Naive thymus-derived CD8-positive, alpha-beta T cell (primary cell): ENCODE measurements at regions of chr10 and their contacts with region 1.

Region 1: DNA sequence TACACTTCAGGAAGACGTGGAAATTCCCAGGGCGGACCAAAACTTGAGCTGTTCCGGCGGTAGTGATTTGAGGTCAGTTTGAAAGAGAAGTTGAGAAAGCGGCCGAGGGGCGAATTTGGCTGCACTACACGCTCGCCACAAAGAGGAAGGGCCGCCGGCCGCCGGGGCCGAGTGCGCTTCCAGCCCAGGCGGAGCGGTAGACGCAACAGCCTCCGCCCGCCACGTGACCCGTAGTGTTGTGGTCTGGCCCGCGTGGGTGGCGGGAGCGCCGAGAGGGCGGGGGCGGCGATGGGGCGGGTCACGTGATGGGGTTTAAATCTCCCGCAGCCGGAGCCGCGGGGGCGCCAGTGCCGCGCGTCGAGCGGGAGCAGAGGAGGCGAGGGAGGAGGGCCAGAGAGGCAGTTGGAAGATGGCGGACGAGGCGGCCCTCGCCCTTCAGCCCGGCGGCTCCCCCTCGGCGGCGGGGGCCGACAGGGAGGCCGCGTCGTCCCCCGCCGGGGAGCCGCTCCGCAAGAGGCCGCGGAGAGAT is at the start of gene SIRT1:
- DNase-seq: peak; percentile 88 to 95 (median 92)
- ATAC-seq: peak; percentile 78 to 82
- H3K4me3 Mint-ChIP-seq: peak within 1 kb of the TSS; percentile 90 to 98 (median 95)
- H3K27ac Mint-ChIP-seq: peak within 1 kb of the TSS; percentile 94 to 98 (median 96)
- H3K4me1 Mint-ChIP-seq: peaks cover 16 to 45% (median 35%) of the 10 kb centered on the region in 4 donors
- H3K27me3 Mint-ChIP-seq: no peaks in the 10 kb centered on the region
- polyA plus RNA-seq, gene SIRT1: 10.2 to 18.7 (median 12.4) TPM

Region 2: GRCh38 chr10:67849331-67850011 is 34.9 kb before region 1 on chr10:
- POLR2A ChIA-PET with region 1: interaction called, 32 read pairs
- DNase-seq: peak; percentile 83 to 96 (median 90)
- ATAC-seq: peak; percentile 98 to 99
- H3K4me3 Mint-ChIP-seq: peak overlapping the region; percentile 85 to 99 (median 96)
- H3K27ac Mint-ChIP-seq: peak overlapping the region; percentile 86 to 100 (median 98)
- H3K4me1 Mint-ChIP-seq: peaks cover 2 to 12% (median 8%) of the 10 kb centered on the region in 4 donors
- H3K27me3 Mint-ChIP-seq: peaks cover 0 to 1% (median 0%) of the 10 kb centered on the region in 5 donors

Region 3: GRCh38 chr10:67943909-67944308 is 59.5 kb after region 1 on chr10:
- POLR2A ChIA-PET with region 1: no interaction called
- DNase-seq: no peak
- ATAC-seq: no peak
- H3K4me3 Mint-ChIP-seq: no peak overlapping the region
- H3K27ac Mint-ChIP-seq: peak overlapping the region in 1 of 10 donors; percentile 20
- H3K4me1 Mint-ChIP-seq: peaks cover 4 to 10% (median 9%) of the 10 kb centered on the region in 4 donors
- H3K27me3 Mint-ChIP-seq: no peaks in the 10 kb centered on the region